WTC11 (cell line): ENCODE measurements at regions of chr7 and their contacts with region 1.

Region 1: DNA sequence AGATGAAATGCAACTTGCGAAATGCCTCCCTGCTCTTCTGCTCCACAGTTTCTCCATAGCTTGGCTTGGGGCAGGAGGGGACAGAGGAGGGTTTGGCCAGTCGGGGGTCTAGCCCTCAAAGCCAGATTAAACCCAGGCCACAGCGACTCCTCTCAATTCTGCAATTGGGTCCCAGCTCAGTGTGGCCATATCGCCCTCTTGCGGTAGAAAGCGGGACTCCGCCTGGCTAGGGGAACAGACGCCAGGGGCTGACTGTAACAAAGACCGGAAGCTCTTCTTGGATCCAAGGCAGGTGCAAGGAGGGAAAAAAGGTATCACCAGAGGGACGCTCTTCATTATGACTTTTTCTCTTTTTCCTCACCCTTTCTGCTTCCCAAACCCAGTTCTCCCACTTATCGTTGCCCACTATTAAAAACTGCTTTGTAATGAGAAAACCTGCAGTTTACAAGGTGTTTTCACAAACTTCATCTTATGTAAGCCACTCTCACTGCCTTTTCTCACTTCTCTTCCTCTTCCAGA is 36.6 kb upstream of the TNPO3 start:
- DNase-seq: peak; percentile 98
- ATAC-seq: peak; percentile 98
- H3K4me3 Mint-ChIP-seq: no peak overlapping the region
- H3K27ac Mint-ChIP-seq: no peak overlapping the region
- H3K4me1 Mint-ChIP-seq: peaks cover 8% of the 10 kb centered on the region
- H3K27me3 Mint-ChIP-seq: no peaks in the 10 kb centered on the region
- CTCF ChIP-seq: peak; percentile 93

Region 2: DNA sequence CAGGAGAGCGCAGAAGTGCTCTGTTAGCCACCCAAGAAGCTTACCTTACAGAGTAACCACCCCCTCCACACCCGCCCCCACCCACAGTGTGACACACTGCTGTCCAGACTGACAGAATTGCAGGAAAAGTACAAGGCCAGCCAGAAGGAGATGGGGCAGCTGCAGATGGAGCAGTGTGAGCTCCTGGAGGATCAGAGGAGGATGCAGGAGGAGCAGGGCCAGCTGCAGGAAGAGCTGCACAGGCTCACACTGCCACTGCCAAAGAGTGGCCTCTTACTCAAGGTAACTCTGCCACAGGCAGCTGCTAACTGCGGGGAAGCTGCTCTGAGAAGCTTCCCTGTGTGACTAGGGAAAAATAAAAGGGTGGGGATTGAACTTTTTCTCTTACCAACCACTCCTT is 282.2 kb before region 1 on chr7:
- CTCF ChIA-PET with region 1: no interaction called
- POLR2A ChIA-PET with region 1: no interaction called
- DNase-seq: no peak
- ATAC-seq: no peak
- H3K4me3 Mint-ChIP-seq: no peak overlapping the region
- H3K27ac Mint-ChIP-seq: no peak overlapping the region
- H3K4me1 Mint-ChIP-seq: peaks cover 4% of the 10 kb centered on the region; the same call in 1 of the 2 replicates
- H3K27me3 Mint-ChIP-seq: no peaks in the 10 kb centered on the region
- CTCF ChIP-seq: no peak

Region 3: GRCh38 chr7:128909625-128910257 is 181.8 kb before region 1 on chr7:
- CTCF ChIA-PET with region 1: interaction called, 49 read pairs
- POLR2A ChIA-PET with region 1: no interaction called
- DNase-seq: peak; percentile 52
- ATAC-seq: peak; percentile 41
- H3K4me3 Mint-ChIP-seq: peak overlapping the region; percentile 72
- H3K27ac Mint-ChIP-seq: no peak overlapping the region
- H3K4me1 Mint-ChIP-seq: peaks cover 28% of the 10 kb centered on the region
- H3K27me3 Mint-ChIP-seq: peaks cover 62% of the 10 kb centered on the region
- CTCF ChIP-seq: no peak

Region 4: DNA sequence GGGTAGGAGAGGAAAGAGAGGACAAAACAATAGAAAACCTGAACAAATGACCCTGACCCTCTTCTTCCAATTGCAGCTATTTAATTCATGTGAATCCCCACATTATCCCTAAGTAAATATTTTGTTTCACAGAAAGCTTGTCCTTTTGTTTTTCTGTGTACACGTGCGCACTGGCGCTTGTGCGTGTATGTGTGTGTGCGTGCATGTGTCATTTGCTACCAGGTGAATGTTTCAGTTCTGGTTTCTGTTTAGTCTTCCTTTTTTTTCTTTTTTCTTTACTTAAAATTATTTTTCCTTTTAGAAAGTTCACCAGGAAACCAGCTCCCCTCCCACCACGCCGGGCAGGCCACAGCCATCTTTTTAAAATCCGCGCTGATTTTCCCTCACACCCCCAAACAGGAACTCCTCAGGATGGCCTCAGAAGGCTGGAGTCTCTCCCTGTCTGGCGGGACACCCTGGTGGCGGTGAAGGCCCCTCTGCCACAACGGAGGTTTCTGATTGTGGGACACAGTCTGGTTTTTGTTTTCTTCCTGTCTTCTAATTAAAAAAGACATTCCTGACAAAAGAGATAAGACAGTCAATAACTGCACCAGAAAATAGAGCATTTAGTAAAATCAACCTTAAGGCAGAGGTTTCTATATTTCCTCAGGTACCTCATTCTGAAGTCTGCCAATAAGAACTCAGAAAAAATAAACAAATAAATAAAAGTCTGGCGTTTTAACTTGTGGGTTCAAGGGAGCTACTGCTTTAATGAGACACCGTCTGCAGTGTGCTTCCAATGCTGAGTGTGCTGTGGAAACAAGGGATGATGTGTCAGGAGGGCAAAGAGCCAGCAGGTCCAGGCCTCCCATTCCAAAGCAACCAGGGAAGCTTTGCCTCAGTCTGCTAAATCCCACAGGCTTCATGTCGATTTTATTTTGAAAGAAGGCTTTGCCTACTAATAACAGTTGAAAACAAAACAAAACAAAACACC is 136.4 kb before region 1 on chr7:
- CTCF ChIA-PET with region 1: interaction called, 16 read pairs
- POLR2A ChIA-PET with region 1: interaction called, 3 read pairs
- DNase-seq: no peak
- ATAC-seq: peak; percentile 66
- H3K4me3 Mint-ChIP-seq: peak overlapping the region; percentile 22; the same call in 1 of the 2 replicates
- H3K27ac Mint-ChIP-seq: peak overlapping the region; percentile 83
- H3K4me1 Mint-ChIP-seq: peaks cover 34% of the 10 kb centered on the region
- H3K27me3 Mint-ChIP-seq: no peaks in the 10 kb centered on the region
- CTCF ChIP-seq: no peak

Region 5: DNA sequence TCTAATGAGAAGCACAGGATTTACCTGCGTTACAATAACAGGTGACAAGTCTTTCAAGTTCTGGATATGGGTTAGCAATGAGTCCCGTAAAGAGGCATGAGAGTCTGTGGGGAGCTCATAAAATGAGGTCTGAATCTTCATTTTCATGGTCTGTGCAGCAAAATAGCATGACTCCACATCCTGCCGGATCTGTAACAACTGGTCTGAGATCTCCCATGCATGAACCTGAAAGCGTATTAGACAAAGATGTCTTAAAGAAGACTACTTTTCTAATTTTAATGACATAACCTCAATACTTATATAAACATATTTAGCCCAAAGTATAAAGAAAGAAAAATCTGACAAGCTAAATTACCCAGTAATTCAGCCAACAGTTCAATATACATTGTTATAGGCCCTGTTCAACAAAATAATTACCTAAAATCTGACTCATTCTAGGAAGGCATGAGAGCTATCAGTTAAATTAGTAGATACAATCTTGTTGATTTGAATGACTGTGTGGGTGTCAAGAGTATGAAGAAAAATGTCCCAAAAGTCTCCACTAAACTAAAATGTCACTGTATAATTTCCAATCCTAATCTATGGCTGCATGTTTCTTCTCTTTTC is 73.5 kb before region 1 on chr7:
- CTCF ChIA-PET with region 1: interaction called, 11 read pairs
- POLR2A ChIA-PET with region 1: no interaction called
- DNase-seq: no peak
- ATAC-seq: no peak
- H3K4me3 Mint-ChIP-seq: no peak overlapping the region
- H3K27ac Mint-ChIP-seq: no peak overlapping the region
- H3K4me1 Mint-ChIP-seq: peaks cover 2% of the 10 kb centered on the region; the same call in 1 of the 2 replicates
- H3K27me3 Mint-ChIP-seq: no peaks in the 10 kb centered on the region
- CTCF ChIP-seq: no peak

Region 6: DNA sequence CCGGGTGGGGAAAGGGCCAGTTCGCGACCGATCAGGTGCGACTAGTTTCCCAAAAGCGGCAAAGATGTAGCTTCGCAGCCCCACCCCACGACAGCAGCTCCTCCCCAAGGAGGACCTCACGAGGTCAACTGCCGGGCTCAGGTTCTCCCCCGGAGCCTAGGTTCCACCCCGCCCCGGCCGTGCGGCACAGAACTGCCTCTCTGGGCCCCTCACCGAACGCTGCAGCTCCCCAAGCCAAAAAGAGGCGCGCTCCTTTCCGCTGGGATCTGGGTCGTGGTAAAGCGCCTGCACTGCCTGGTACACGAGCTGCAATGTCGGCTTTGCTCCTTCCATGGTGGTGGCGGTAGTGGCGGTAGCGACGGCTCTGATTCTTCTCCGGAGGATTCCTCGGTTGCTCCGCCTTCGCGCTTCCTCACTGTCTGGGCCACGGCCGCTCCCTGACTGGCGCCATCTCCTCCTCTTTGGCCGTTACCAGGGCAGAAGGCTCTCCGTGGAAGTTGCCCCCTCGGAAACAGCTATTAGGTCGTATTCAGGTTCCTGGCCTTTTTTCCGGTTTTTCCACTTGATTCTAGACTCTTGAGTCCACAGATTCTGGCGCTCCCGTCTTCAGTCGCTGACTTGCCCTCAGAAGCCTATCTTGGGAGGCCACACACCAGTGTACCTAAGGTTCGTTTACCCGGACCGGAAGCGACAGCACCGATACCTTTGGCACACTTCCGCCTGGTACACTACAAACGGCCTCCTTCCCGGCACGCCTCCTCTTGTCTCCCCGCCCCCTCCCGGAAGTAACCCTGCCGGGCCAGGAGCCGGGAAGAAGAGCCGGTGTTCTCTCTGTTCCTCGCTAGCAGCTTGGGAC is 36.9 kb before region 1 on chr7 and contains the start of gene TNPO3:
- CTCF ChIA-PET with region 1: interaction called, 38 read pairs
- POLR2A ChIA-PET with region 1: interaction called, 8 read pairs
- DNase-seq: peak; percentile 93
- ATAC-seq: peak; percentile 87
- H3K4me3 Mint-ChIP-seq: peak within 1 kb of the TSS; percentile 97
- H3K27ac Mint-ChIP-seq: peak within 1 kb of the TSS; percentile 100
- H3K4me1 Mint-ChIP-seq: peaks cover 36% of the 10 kb centered on the region
- H3K27me3 Mint-ChIP-seq: no peaks in the 10 kb centered on the region
- CTCF ChIP-seq: no peak
- total RNA-seq, gene TNPO3: 87.0 to 91.7 TPM (median 89.1 TPM) in 3 replicates

Region 7: GRCh38 chr7:129126314-129126713 is 34.8 kb after region 1 on chr7:
- CTCF ChIA-PET with region 1: interaction called, 12 read pairs
- POLR2A ChIA-PET with region 1: no interaction called
- DNase-seq: peak; percentile 63
- ATAC-seq: peak; percentile 98
- H3K4me3 Mint-ChIP-seq: no peak overlapping the region
- H3K27ac Mint-ChIP-seq: no peak overlapping the region
- H3K4me1 Mint-ChIP-seq: no peaks in the 10 kb centered on the region
- H3K27me3 Mint-ChIP-seq: peaks cover 19% of the 10 kb centered on the region
- CTCF ChIP-seq: no peak

Region 8: GRCh38 chr7:129197771-129198170 is 106.2 kb after region 1 on chr7:
- CTCF ChIA-PET with region 1: no interaction called
- POLR2A ChIA-PET with region 1: no interaction called
- DNase-seq: no peak
- ATAC-seq: no peak
- H3K4me3 Mint-ChIP-seq: no peak overlapping the region
- H3K27ac Mint-ChIP-seq: no peak overlapping the region
- H3K4me1 Mint-ChIP-seq: no peaks in the 10 kb centered on the region
- H3K27me3 Mint-ChIP-seq: no peaks in the 10 kb centered on the region
- CTCF ChIP-seq: no peak

Region 9: GRCh38 chr7:129210256-129210988 is 118.9 kb after region 1 on chr7:
- CTCF ChIA-PET with region 1: interaction called, 35 read pairs
- POLR2A ChIA-PET with region 1: no interaction called
- DNase-seq: peak; percentile 91
- ATAC-seq: peak; percentile 90
- H3K4me3 Mint-ChIP-seq: no peak overlapping the region
- H3K27ac Mint-ChIP-seq: no peak overlapping the region; the same call in 1 of the 2 replicates
- H3K4me1 Mint-ChIP-seq: 0 out of 2 replicates have a peak, but pooled peaks cover 5% of the 10 kb centered on the region
- H3K27me3 Mint-ChIP-seq: no peaks in the 10 kb centered on the region
- CTCF ChIP-seq: peak; percentile 84